Activated CD4-positive, alpha-beta memory T cell treated with anti-CD3 and anti-CD28 coated beads, Interleukin-2, amount 10 ng/mL, durations not matched to agents 7 days and 5 days (primary cell): ENCODE measurements at regions of chr7 and their contacts with region 1.

Region 1: GRCh38 chr7:55255496-55256435 is 109.4 kb upstream of the LANCL2 start:
- DNase-seq: peak; percentile 75
- H3K4me3 Mint-ChIP-seq: peak overlapping the region; percentile 67
- H3K27ac Mint-ChIP-seq: no peak overlapping the region
- H3K4me1 Mint-ChIP-seq: peaks cover 11% of the 10 kb centered on the region
- H3K27me3 Mint-ChIP-seq: peaks cover 40% of the 10 kb centered on the region

Region 2: GRCh38 chr7:54758702-54759592 is 496.8 kb before region 1 on chr7 and contains the start of gene SEC61G:
- CTCF ChIA-PET with region 1: interaction called, 11 read pairs
- POLR2A ChIA-PET with region 1: interaction called, 6 read pairs
- DNase-seq: peak; percentile 96
- H3K4me3 Mint-ChIP-seq: peak within 1 kb of the TSS; percentile 100
- H3K27ac Mint-ChIP-seq: peak within 1 kb of the TSS; percentile 96
- H3K4me1 Mint-ChIP-seq: peaks cover 37% of the 10 kb centered on the region
- H3K27me3 Mint-ChIP-seq: peaks cover 7% of the 10 kb centered on the region
- total RNA-seq, gene SEC61G: 159 to 170 TPM

Region 3: DNA sequence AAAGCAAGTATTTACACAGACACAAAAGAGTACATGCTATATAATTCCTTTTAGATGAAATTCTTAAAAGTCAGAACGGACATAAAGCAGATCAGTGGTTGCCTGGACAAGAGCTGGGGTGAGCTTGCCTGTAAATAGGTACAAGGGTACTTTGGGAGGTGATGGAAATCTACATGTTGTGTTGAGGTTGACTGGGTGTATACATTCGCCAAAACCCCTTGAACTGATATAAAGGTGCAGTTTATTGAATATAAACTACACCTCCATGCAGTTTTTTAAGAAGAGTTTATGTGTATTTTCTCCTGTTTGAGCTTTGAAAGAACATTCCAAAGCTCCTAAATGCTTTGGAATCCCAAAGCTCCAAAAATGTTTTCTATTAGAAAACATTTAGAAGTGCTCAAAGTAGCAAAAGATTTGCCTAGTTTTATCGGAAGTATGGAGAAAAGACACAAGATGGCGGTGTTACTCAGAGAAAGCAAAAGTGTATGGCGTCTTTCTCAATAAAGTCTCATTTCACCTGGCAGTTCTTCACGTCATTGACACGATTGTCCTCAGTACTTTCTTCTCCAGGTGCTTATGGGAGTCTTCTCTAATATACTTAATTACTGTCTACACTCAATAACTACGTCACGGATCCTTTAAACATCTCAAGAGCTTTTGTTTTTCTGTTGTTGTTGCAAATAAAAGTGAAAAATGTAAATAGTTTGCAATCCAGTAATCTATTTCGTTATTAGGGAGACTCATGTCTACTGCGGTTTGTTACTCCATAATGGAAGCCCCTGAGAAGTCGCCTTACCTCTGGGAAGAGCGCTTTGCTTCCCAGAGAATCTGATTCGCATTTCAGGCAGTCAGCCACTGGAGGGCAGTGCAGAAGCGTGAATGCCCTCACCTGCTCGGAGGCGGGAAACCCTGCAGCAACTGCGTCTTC is 482.0 kb before region 1 on chr7:
- CTCF ChIA-PET with region 1: interaction called, 109 read pairs
- POLR2A ChIA-PET with region 1: interaction called, 5 read pairs
- DNase-seq: peak; percentile 69
- H3K4me3 Mint-ChIP-seq: peak overlapping the region; percentile 66
- H3K27ac Mint-ChIP-seq: no peak overlapping the region
- H3K4me1 Mint-ChIP-seq: peaks cover 9% of the 10 kb centered on the region
- H3K27me3 Mint-ChIP-seq: peaks cover 29% of the 10 kb centered on the region

Region 4: DNA sequence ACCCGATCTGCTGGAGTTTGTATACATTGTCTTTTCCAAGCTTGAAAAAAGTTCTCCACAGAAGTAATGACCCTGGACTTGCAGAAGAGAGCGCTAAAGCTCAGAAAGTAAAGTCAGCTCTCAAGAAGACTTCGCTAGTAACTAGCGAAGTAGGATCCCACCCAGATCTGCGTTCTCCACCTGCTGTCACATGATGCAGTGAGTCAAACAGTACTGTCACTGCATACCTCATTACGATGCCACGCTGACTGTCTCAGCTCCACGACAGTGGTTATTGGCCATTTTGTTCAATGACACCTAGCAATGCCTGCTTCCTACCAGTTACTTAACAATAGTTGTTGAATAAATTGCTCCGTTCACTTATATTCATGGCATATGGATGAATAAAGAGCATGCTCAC is 467.1 kb before region 1 on chr7:
- CTCF ChIA-PET with region 1: interaction called, 19 read pairs
- POLR2A ChIA-PET with region 1: no interaction called
- DNase-seq: no peak
- H3K4me3 Mint-ChIP-seq: no peak overlapping the region
- H3K27ac Mint-ChIP-seq: no peak overlapping the region
- H3K4me1 Mint-ChIP-seq: no peaks in the 10 kb centered on the region
- H3K27me3 Mint-ChIP-seq: peaks cover 34% of the 10 kb centered on the region

Region 5: GRCh38 chr7:55230014-55230413 is 25.8 kb before region 1 on chr7:
- CTCF ChIA-PET with region 1: no interaction called
- POLR2A ChIA-PET with region 1: no interaction called
- DNase-seq: no peak
- H3K4me3 Mint-ChIP-seq: no peak overlapping the region
- H3K27ac Mint-ChIP-seq: no peak overlapping the region
- H3K4me1 Mint-ChIP-seq: no peaks in the 10 kb centered on the region
- H3K27me3 Mint-ChIP-seq: peaks cover 16% of the 10 kb centered on the region

Region 6: GRCh38 chr7:55245271-55245723 is 10.5 kb before region 1 on chr7:
- CTCF ChIA-PET with region 1: interaction called, 10 read pairs
- POLR2A ChIA-PET with region 1: no interaction called
- DNase-seq: no peak
- H3K4me3 Mint-ChIP-seq: no peak overlapping the region
- H3K27ac Mint-ChIP-seq: no peak overlapping the region
- H3K4me1 Mint-ChIP-seq: no peaks in the 10 kb centered on the region
- H3K27me3 Mint-ChIP-seq: peaks cover 3% of the 10 kb centered on the region

Region 7: GRCh38 chr7:55265836-55266642 is 10.3 kb after region 1 on chr7:
- CTCF ChIA-PET with region 1: interaction called, 10 read pairs
- POLR2A ChIA-PET with region 1: no interaction called
- DNase-seq: no peak
- H3K4me3 Mint-ChIP-seq: no peak overlapping the region
- H3K27ac Mint-ChIP-seq: no peak overlapping the region
- H3K4me1 Mint-ChIP-seq: no peaks in the 10 kb centered on the region
- H3K27me3 Mint-ChIP-seq: peaks cover 18% of the 10 kb centered on the region

Region 8: GRCh38 chr7:55641273-55641691 is 385.5 kb after region 1 on chr7:
- CTCF ChIA-PET with region 1: no interaction called
- POLR2A ChIA-PET with region 1: no interaction called
- DNase-seq: peak; percentile 35
- H3K4me3 Mint-ChIP-seq: no peak overlapping the region
- H3K27ac Mint-ChIP-seq: no peak overlapping the region
- H3K4me1 Mint-ChIP-seq: peaks cover 12% of the 10 kb centered on the region
- H3K27me3 Mint-ChIP-seq: peaks cover 6% of the 10 kb centered on the region